Activated CD4-positive, alpha-beta T cell treated with anti-CD3 and anti-CD28 coated beads for 36 hours (primary cell): ENCODE measurements at regions of chr1 and their contacts with region 1.

Region 1: DNA sequence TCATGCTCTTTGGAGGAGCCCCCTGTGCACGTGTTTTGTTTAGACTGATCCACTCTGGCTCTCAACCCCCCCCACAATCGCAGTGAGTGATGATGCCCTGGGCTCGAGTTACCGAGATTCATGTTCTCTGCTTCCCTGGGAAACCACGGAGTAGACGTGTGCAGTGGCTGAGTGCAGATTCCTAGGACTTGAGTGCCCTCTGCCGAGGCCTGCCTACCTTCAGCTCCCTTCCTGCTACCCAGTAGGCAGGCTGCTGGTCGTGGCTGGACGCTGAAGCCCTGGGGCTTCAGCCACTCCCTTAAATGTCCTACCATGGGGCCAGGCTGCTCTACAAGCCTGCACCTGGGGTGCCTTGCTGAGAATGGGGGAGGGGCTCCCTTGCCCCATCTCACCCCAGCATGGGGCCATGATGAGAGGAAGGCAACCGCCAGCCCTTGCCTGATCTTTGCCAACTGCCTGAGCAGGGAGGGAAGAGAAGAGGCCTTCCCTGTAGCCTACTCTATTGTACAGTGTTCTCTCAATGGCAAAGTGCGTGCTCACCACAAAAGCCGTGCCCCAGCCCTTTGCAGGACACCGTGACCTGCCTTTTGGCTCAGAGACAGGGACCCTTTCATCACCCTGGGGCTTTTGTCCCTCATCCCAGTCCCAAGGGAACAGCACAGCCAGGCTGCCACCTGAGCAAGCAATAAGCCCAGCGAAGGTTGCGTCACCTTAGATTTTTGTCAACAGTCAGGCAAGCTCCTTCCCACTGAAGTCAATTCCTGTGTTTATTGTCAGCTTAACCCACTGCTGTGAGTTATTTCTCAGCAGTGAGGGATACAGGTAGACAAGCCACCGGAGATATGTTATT is 4.1 kb upstream of the GRIK3 start:
- DNase-seq: peak; percentile 17
- ATAC-seq: no peak
- H3K4me3 Mint-ChIP-seq: no peak overlapping the region
- H3K27ac Mint-ChIP-seq: no peak overlapping the region
- H3K4me1 Mint-ChIP-seq: peaks cover 3% of the 10 kb centered on the region
- H3K27me3 Mint-ChIP-seq: peaks cover 56% of the 10 kb centered on the region

Region 2: DNA sequence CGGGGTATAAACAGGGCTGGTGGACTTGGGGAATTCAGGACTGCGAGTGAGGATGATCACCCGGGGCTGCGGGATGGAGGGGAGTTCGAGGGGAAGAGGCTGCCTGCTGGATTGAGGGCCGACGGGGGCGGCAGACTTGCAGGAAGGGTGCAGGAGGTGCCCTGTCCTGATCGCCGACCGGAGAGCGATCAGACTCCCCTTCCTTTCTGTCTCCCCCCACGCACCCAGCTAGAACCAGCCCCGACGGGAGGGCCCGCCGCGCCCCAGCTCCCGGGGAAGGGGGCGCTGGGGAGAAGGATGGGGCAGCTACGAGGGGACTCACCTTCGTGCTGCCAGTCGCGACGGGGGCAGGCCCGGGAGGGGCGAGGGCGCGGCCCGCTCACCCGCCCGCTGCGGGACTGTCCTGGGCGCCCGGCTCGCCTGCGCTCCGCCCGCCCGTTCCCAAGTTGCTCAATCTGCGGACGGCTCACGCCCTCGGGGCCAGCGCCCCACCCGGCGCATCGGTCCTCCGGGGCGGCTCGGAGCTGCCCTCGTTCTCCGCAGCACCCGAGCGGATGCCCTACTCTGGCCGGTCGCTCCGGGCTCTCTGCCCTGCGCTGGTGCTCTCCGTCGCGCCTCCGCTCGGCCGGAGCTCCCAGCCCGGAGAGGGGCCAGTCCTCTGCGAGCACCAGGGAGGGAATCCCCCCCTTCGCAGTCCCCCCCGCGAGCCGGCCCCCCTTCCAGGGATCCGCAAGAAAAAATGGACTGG is 596.0 kb after region 1 on chr1 and contains the start of gene RSPO1:
- CTCF ChIA-PET with region 1: no interaction called
- POLR2A ChIA-PET with region 1: no interaction called
- intact Hi-C with region 1: loop called in 1 of 2 experiments (anchors 10 kb)
- DNase-seq: peak; percentile 11
- ATAC-seq: no peak
- H3K4me3 Mint-ChIP-seq: no peak within 1 kb of the TSS
- H3K27ac Mint-ChIP-seq: no peak within 1 kb of the TSS
- H3K4me1 Mint-ChIP-seq: peaks cover 6% of the 10 kb centered on the region
- H3K27me3 Mint-ChIP-seq: peaks cover 66% of the 10 kb centered on the region
- total RNA-seq, gene RSPO1: not detected

Region 3: DNA sequence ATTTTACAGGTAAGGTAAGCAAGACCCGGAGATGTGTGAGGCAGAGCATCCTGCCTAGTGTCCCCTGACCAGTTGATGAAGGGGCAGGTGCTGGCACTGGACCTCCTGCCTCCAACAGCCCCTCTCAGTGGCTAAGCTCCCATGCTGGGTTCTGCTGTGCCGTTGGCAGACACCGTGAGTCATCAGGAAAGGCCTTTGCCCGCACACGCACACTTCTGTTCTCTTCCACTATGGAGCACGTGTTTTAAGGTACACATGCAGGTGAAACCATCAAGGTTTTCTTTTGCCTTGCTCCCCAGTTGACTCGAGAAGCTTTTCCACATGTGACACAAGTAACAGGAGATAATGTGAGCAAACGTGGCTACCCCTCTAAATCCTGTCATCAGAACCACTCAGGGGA is 1613.2 kb after region 1 on chr1:
- CTCF ChIA-PET with region 1: no interaction called
- POLR2A ChIA-PET with region 1: no interaction called
- intact Hi-C with region 1: no loop called
- DNase-seq: no peak
- ATAC-seq: no peak
- H3K4me3 Mint-ChIP-seq: no peak overlapping the region
- H3K27ac Mint-ChIP-seq: no peak overlapping the region
- H3K4me1 Mint-ChIP-seq: no peaks in the 10 kb centered on the region
- H3K27me3 Mint-ChIP-seq: peaks cover 4% of the 10 kb centered on the region